PC-3 (cell line): ENCODE measurements at regions of chr11 and their contacts with region 1.

Region 1: DNA sequence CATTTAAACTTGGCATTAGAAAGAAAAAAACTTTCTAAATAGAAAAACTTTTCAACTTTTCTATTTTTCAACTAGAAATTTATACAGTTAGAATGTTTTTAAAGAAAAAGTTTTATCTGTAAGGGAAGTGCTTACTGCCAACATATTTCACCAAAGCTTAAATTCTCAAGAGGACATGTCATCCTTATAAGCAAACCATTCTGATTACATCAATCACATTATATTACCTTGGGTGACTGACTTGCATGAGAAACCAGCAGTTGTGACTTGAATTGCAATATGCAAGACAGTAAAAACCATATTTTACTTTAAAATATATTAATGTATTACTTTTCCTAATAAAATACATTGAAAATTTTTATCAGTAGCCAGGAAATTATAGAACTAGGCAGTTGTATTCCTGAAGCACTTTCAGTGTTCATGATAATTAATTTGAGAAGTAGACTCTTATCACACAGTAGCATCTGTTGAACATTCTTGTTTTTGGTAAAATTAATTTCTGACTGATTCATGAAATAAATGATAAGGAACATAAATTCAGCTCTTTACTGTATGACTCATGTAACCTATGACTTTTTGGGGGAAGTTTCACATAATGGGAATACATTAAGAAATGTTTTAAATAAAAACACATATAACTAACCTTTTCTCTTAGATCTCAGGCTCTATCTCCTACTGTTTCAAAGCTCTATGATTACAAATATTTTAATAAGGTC is 345.0 kb upstream of the CCDC179 start:
- DNase-seq: peak; percentile 45
- ATAC-seq: peak; percentile 25; the same call in 1 of the 2 replicates
- H3K4me3 ChIP-seq: no peak overlapping the region
- H3K27ac ChIP-seq: peak overlapping the region; percentile 76
- H3K4me1 ChIP-seq: peaks cover 30% of the 10 kb centered on the region
- H3K27me3 ChIP-seq: no peaks in the 10 kb centered on the region
- CTCF ChIP-seq: no peak

Region 2: DNA sequence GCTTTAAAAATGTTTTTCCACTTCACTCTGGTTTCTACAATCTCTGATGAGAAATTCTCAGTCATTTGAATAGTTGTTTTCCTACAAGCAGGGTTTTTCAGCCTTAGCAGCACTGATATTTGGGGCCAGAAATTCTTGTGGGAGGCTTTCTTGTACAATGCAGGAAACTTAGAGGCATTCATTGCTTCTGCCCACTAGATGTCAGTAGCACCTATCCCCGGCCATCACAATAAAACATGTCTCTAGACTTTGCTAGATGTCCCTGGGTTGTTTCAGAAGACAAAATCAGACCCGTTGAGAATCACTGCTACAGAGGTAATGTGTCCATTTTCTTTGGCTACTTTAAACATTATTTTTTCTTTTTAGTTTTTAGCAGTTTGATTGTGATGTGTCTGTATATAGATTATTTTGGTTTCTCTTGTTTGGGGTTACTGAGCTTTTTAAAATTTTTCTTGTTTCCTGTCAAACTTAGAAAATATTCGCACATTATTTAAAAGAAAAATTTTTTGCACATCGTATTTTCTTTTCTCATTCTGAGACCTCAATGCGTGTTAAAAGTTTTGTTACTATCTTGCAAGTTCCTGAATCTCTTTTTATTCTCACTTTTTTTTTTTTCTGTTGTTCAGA is 284.3 kb before region 1 on chr11:
- CTCF ChIA-PET with region 1: no interaction called
- POLR2A ChIA-PET with region 1: no interaction called
- intact Hi-C with region 1: loop called (anchors 5 kb)
- DNase-seq: peak; percentile 64
- ATAC-seq: peak; percentile 77
- H3K4me3 ChIP-seq: no peak overlapping the region
- H3K27ac ChIP-seq: no peak overlapping the region
- H3K4me1 ChIP-seq: no peaks in the 10 kb centered on the region
- H3K27me3 ChIP-seq: no peaks in the 10 kb centered on the region
- CTCF ChIP-seq: peak; percentile 76

Region 3: GRCh38 chr11:23113887-23114216 is 91.5 kb before region 1 on chr11:
- CTCF ChIA-PET with region 1: no interaction called
- POLR2A ChIA-PET with region 1: no interaction called
- intact Hi-C with region 1: no loop called
- DNase-seq: no peak
- ATAC-seq: no peak
- H3K4me3 ChIP-seq: no peak overlapping the region
- H3K27ac ChIP-seq: no peak overlapping the region
- H3K4me1 ChIP-seq: peaks cover 13% of the 10 kb centered on the region; the same call in 1 of the 2 replicates
- H3K27me3 ChIP-seq: no peaks in the 10 kb centered on the region
- CTCF ChIP-seq: no peak

Region 4: DNA sequence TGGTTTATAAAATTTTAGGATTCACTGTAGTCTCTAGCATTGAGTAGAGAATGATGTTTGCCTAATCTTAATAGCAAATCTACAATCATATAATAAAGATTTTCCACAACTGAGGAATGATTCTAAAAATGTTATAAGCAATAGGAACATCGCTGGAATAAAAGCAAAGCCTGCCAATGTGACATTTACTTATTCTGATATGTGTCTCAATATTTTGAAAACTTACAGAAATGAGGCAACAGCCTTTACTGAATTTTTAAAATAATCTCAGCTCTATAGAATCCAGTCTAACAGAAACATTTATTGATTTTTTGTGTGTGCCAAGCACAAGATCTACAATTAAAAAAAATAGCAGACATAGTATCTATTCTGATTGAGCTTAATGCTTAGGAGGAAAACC is 41.3 kb before region 1 on chr11:
- CTCF ChIA-PET with region 1: no interaction called
- POLR2A ChIA-PET with region 1: no interaction called
- intact Hi-C with region 1: no loop called
- DNase-seq: no peak
- ATAC-seq: no peak
- H3K4me3 ChIP-seq: no peak overlapping the region
- H3K27ac ChIP-seq: no peak overlapping the region
- H3K4me1 ChIP-seq: no peaks in the 10 kb centered on the region
- H3K27me3 ChIP-seq: no peaks in the 10 kb centered on the region
- CTCF ChIP-seq: no peak